ENCODE measurements at regions of chr5 and their contacts with region 1.

Region 1: DNA sequence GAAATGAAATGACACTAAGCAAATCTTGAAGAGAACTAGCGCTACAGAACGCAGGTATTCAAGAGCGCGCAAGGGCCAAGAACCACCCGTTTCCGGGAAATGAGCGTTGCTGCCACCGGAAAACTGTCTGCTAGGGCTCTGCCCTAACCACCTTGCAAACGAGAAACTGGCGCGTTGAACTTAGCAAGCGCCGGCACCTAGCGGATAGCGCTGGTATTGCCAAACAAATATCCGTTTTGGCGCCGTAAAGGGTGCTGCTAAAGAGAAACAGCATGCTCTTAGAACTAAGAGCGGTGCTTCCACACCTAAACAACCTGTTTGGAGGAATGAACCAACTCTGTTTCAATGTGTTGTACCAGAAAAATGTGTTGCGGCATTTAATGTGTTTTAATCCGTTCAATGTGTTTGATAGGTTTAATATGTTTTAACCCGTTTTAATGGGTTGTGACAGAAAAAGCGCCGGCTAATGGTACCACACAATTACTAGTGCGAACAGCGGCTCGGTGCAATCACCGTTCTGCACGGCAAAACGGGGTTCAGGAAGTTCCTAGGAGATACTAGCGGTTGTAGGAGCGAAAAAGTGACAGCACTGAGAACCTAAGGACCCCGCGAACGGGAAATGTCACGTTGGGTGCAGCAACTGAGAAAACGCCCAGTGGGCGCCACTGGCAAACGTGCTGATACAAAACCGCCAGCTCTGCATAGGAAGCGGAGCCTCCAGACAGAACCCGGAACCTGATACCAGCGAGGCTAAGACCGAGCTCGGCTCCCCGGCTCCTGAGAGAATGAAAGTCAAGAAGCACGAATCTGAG is at the start of gene ANXA2R:
- DNase-seq: peak; percentile 97
- ATAC-seq: peak; percentile 49
- H3K4me3 Mint-ChIP-seq: peak within 1 kb of the TSS; percentile 93
- H3K27ac Mint-ChIP-seq: peak within 1 kb of the TSS; percentile 100
- H3K4me1 Mint-ChIP-seq: peaks cover 39% of the 10 kb centered on the region
- H3K27me3 Mint-ChIP-seq: no peaks in the 10 kb centered on the region
- total RNA-seq, gene ANXA2R: 28.0 to 29.3 TPM

Region 2: GRCh38 chr5:42950440-42951292 is 89.8 kb before region 1 on chr5:
- CTCF ChIA-PET with region 1: interaction called, 23 read pairs
- POLR2A ChIA-PET with region 1: interaction called, 199 read pairs
- DNase-seq: peak; percentile 73
- ATAC-seq: peak; percentile 38
- H3K4me3 Mint-ChIP-seq: peak overlapping the region; percentile 96
- H3K27ac Mint-ChIP-seq: peak overlapping the region; percentile 100
- H3K4me1 Mint-ChIP-seq: peaks cover 43% of the 10 kb centered on the region
- H3K27me3 Mint-ChIP-seq: no peaks in the 10 kb centered on the region

Region 3: GRCh38 chr5:43008369-43009153 is 31.9 kb before region 1 on chr5:
- CTCF ChIA-PET with region 1: interaction called, 38 read pairs
- POLR2A ChIA-PET with region 1: interaction called, 123 read pairs
- DNase-seq: peak; percentile 94
- ATAC-seq: peak; percentile 71
- H3K4me3 Mint-ChIP-seq: peak overlapping the region; percentile 90
- H3K27ac Mint-ChIP-seq: peak overlapping the region; percentile 98
- H3K4me1 Mint-ChIP-seq: peaks cover 44% of the 10 kb centered on the region
- H3K27me3 Mint-ChIP-seq: peaks cover 1% of the 10 kb centered on the region

Region 4: GRCh38 chr5:43061352-43062075 is 21.0 kb after region 1 on chr5:
- CTCF ChIA-PET with region 1: interaction called, 54 read pairs
- POLR2A ChIA-PET with region 1: interaction called, 243 read pairs
- DNase-seq: no peak
- ATAC-seq: no peak
- H3K4me3 Mint-ChIP-seq: no peak overlapping the region
- H3K27ac Mint-ChIP-seq: no peak overlapping the region
- H3K4me1 Mint-ChIP-seq: peaks cover 16% of the 10 kb centered on the region
- H3K27me3 Mint-ChIP-seq: no peaks in the 10 kb centered on the region

Region 5: GRCh38 chr5:43256261-43256966 is 215.9 kb after region 1 on chr5:
- CTCF ChIA-PET with region 1: no interaction called
- POLR2A ChIA-PET with region 1: no interaction called
- DNase-seq: no peak
- ATAC-seq: no peak
- H3K4me3 Mint-ChIP-seq: no peak overlapping the region
- H3K27ac Mint-ChIP-seq: no peak overlapping the region
- H3K4me1 Mint-ChIP-seq: no peaks in the 10 kb centered on the region
- H3K27me3 Mint-ChIP-seq: peaks cover 29% of the 10 kb centered on the region

Region 6: GRCh38 chr5:43313035-43313853 is 272.8 kb after region 1 on chr5 and contains the start of gene HMGCS1:
- CTCF ChIA-PET with region 1: interaction called, 8 read pairs
- POLR2A ChIA-PET with region 1: interaction called, 11 read pairs
- DNase-seq: peak; percentile 99
- ATAC-seq: peak; percentile 94
- H3K4me3 Mint-ChIP-seq: peak within 1 kb of the TSS; percentile 96
- H3K27ac Mint-ChIP-seq: peak within 1 kb of the TSS; percentile 95
- H3K4me1 Mint-ChIP-seq: peaks cover 62% of the 10 kb centered on the region
- H3K27me3 Mint-ChIP-seq: no peaks in the 10 kb centered on the region
- total RNA-seq, gene HMGCS1: 82.4 to 90.6 TPM